Cardiac septum (tissue), 1 donor: ENCODE measurements at regions of chr7 and their contacts with region 1.

Region 1: GRCh38 chr7:145082366-145083161 is 246.7 kb upstream of the TPK1 start:
- DNase-seq: no peak

Region 2: DNA sequence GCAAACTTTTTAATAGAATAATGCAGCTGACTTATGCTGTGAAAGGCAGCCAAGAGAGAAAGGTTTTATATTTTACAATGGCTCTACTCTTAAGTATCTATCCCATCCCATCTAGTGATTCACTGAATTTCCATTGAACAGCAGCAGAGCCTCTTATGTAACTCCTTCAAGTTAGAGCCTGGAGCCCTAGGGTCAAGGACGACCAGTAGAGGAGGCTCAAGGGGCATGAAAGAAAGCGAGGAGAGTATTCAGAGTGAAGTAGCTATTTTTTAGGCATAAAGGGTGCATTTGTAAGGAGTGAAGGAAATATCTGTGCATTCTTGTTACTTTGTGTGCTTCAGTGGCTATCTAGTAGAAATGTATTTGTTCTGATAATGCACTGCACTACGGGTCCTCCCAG is 66.5 kb before region 1 on chr7:
- intact Hi-C with region 1: loop called (anchors 10 kb)
- DNase-seq: no peak